PC-3 (cell line): ENCODE measurements at regions of chr12 and their contacts with region 1.

Region 1: DNA sequence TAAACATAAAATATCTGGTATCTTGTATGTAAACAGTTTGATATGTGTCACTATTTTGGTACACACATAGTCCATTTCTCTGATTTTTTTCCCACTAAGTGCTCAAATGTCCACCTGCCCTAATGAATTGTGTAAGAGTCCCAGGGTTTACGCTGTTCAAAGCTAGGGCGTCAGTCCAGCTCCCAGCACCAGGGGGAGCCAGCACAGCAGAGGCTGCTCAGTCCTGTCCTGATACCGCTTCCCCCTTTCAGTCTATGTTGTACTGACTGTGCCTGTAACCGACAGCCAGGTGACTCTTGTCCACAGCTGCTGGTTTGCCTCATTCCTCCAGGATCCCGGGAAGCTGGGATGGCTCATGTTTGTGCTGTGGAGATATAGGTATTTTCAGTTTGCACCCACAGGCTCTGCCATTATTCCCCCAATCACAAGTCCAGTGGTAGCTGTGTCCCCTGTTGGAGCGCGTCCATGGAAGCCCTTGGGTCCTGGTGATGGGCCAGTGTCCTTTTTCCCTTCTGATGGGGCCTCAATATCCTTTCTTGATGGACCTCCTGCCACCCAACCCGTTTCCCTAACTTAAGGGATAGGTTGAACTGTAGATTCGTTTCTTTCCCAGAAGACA is 242.0 kb downstream of the NEDD1 start:
- DNase-seq: peak; percentile 60
- ATAC-seq: peak; percentile 80
- H3K4me3 ChIP-seq: no peak overlapping the region
- H3K27ac ChIP-seq: no peak overlapping the region
- H3K4me1 ChIP-seq: no peaks in the 10 kb centered on the region
- H3K27me3 ChIP-seq: peaks cover 33% of the 10 kb centered on the region
- CTCF ChIP-seq: peak; percentile 84

Region 2: DNA sequence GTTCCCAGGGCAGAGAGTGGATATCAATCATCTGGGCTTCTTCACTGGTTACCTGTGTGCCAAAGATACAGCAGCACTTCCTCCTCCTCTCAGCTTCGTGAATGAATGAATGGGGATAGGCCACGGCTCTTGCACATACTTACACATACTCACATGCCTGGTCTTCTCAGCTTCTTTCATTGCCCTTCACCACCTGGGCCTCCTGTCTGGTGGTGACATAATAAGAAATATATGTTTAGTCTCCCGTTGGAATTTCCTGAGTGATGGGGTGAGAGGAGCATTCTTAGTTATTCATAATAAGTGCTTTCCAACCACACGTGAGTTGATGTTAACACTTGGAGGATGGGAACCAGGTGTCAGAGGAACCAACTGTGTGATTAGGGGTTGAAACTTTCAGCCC is 45.5 kb after region 1 on chr12:
- CTCF ChIA-PET with region 1: no interaction called
- POLR2A ChIA-PET with region 1: no interaction called
- intact Hi-C with region 1: no loop called
- DNase-seq: no peak
- ATAC-seq: no peak
- H3K4me3 ChIP-seq: no peak overlapping the region
- H3K27ac ChIP-seq: no peak overlapping the region
- H3K4me1 ChIP-seq: no peaks in the 10 kb centered on the region
- H3K27me3 ChIP-seq: no peaks in the 10 kb centered on the region
- CTCF ChIP-seq: no peak

Region 3: DNA sequence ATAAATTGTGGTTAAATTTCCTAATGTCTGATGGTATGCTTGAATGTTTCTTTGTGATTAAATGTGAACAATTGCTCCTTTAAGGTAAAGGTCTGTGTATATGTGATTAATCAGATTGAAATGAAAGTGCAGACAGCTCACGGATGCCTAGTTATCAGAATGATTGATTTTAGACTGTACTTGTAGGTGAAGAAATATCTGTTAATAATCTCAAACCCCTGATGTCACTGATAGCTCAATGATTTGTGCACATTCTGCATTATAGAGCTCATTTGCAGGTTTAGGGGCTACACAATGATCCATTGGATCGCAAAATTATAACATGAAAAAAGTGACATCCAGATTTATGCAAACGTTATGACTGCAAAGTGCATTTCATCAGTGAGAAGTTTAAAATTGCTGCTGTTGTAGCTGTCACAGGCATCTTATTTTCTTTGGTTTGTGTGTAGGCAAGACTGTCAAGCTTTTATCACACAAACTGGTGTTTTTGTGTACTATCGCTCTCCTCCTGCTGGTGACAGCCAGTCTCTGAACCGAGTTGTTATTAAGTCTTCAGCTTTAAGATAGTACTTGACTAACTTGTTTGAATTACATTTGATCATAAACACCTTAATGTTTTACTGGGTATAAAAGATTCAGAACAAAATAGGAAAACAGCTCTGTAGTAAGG is 210.1 kb after region 1 on chr12:
- CTCF ChIA-PET with region 1: no interaction called
- POLR2A ChIA-PET with region 1: no interaction called
- intact Hi-C with region 1: no loop called
- DNase-seq: no peak
- ATAC-seq: no peak
- H3K4me3 ChIP-seq: no peak overlapping the region
- H3K27ac ChIP-seq: no peak overlapping the region
- H3K4me1 ChIP-seq: no peaks in the 10 kb centered on the region
- H3K27me3 ChIP-seq: peaks cover 46% of the 10 kb centered on the region; the same call in 1 of the 2 replicates
- CTCF ChIP-seq: no peak

Region 4: GRCh38 chr12:98373025-98373554 is 1224.0 kb after region 1 on chr12:
- CTCF ChIA-PET with region 1: no interaction called
- POLR2A ChIA-PET with region 1: no interaction called
- intact Hi-C with region 1: loop called (anchors 5 kb)
- DNase-seq: peak; percentile 68
- ATAC-seq: peak; percentile 56
- H3K4me3 ChIP-seq: no peak overlapping the region
- H3K27ac ChIP-seq: no peak overlapping the region
- H3K4me1 ChIP-seq: no peaks in the 10 kb centered on the region
- H3K27me3 ChIP-seq: peaks cover 72% of the 10 kb centered on the region
- CTCF ChIP-seq: peak; percentile 74